Posterior vena cava (tissue), 2 donors: ENCODE measurements at regions of chr6 and their contacts with region 1.

Region 1: GRCh38 chr6:19515939-19516338 is 321.2 kb upstream of the ID4 start:
- DNase-seq: no peak

Region 2: DNA sequence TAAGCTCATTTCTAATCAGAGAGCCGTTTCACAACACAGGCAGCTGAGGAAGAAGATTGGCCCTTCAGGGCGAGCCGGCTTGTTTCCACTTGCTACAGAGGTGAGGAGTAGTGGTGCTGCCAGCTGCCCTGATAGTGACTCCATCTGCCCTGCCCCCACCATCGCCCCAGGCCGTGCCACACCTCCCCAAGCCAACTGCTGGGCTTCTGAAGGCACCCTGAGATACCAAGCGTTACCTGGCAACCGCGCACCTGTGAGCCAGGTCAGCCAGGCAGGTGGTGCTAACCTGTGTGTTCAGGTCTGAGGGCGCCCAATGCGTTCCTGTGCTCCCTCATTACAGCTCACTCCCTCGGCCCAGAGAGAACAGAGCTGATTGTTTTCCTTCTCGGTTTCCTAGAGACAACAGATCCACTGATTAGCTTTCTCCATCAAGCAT is 22.2 kb after region 1 on chr6:
- intact Hi-C with region 1: loop called in 1 of 2 experiments (anchors 1 kb)
- DNase-seq: no peak

Region 3: GRCh38 chr6:19632786-19633185 is 116.8 kb after region 1 on chr6:
- intact Hi-C with region 1: no loop called
- DNase-seq: no peak

Region 4: GRCh38 chr6:20572940-20573339 is 1057.0 kb after region 1 on chr6:
- intact Hi-C with region 1: no loop called
- DNase-seq: no peak